Heart left ventricle (tissue), 16 donors: ENCODE measurements at regions of chr1 and their contacts with region 1.

Region 1: GRCh38 chr1:95116580-95117206 is 462 bp upstream of the TLCD4 start:
- DNase-seq: peak; percentile 55 to 64 (median 57)
- ATAC-seq: peak; percentile 57 to 82 (median 74)
- H3K4me3 ChIP-seq: peak overlapping the region; percentile 47 to 96 (median 74)
- H3K27ac ChIP-seq: peak overlapping the region in 11 of 12 donors; percentile 62 to 91 (median 85)
- H3K4me1 ChIP-seq: peaks cover 0 to 35% (median 4%) of the 10 kb centered on the region in 12 donors
- H3K27me3 ChIP-seq: peaks cover 0 to 27% (median 0%) of the 10 kb centered on the region in 9 donors
- CTCF ChIP-seq: peak; percentile 27 to 65 (median 54)
- POLR2A ChIP-seq: no peak

Region 2: DNA sequence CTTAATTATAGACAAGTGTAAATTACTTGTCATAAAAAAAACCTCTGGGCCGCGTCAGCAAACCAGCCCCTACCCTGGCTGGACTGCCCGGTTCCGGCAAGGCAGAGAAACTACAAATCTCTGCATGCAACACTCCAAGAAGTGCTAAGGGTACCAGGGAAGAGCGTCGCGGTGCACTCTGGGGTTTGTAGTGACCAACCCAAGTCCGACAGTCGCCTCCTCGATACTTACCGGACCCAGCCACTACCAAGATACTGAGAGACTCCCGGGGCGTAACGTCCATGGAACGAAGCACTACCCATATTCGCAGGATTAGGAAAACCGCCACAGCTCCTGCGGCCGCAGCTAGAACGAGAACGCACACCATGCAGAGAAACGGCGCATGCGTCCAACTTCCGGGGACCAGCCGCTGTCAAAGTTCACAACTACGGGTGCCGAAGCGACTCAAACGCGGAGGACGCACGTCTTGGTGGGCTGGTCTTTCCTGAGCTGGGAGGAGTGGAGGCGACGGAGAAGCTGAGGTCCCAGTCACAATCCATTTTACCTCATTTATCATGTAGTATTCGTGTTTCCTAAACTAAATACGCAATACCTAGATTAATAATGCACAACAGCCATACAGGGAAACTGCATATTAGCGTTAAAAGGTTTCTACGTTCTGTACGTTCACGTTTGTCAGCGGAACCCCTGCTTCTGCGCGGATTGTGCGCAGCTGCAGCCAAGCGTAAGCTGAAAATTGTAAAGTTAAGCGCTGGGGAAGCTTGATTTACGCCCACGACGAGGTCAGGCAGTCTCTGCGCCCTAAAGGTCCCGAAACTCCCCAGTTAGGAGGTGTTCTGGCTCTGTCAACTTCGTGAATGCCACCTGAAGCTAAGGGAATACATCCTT is 43.9 kb before region 1 on chr1 and contains the start of gene ALG14:
- intact Hi-C with region 1: loop called in 2 of 10 experiments (anchors 2 kb)
- DNase-seq: peak; percentile 95 to 96 (median 96)
- ATAC-seq: peak; percentile 99
- H3K4me3 ChIP-seq: peak within 1 kb of the TSS; percentile 65 to 90 (median 69)
- H3K27ac ChIP-seq: peak within 1 kb of the TSS; percentile 85 to 98 (median 93)
- H3K4me1 ChIP-seq: peaks cover 0 to 17% (median 8%) of the 10 kb centered on the region in 12 donors
- H3K27me3 ChIP-seq: no peaks in the 10 kb centered on the region
- CTCF ChIP-seq: no peak
- POLR2A ChIP-seq: peak in 1 of 2 donors; percentile 58
- total RNA-seq, gene ALG14: 0.56 to 4.7 (median 3.2) TPM

Region 3: DNA sequence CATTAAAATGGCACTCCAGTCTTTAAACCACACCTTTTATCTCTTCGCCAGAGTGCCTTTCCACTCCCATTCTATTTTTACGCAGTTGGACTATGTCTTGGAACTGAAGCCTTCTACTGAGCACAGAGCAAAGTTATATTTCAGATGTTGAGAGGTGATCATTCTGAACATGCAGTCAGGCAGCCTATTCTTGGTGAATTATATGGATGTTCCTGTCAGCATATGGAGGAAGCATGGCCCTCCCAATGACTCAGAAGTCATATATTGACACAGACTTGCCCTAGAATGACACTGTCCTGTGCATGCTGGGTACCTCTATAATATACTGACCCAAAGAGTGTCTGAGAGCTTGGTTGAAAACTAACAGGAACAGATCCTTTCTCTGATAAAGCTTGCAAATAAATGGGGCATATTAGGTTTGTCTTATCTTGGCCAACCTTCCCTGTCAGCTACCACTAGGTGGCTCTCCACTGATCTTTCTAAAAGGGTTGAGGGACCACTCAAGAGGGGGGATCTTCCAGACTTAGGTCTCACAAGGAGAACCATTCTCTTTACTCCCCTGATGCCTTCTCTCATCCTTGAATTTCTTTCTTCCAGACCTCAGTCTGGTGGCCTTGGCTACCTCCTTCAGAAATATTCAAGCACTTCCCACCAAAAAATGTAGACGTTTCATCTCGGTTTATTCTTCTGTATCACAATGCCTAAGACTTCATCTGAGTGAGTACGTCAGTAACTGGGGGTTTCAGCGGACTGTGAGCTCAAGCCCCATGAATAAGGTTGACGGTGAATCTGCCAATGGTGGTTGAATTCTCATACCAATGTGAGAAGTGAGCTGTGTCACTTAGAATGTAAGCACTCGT is 32.1 kb before region 1 on chr1:
- intact Hi-C with region 1: loop called in 1 of 10 experiments (anchors 5 kb)
- DNase-seq: no peak
- ATAC-seq: peak in 3 of 4 donors; percentile 9 to 65 (median 61)
- H3K4me3 ChIP-seq: no peak overlapping the region
- H3K27ac ChIP-seq: peak overlapping the region in 8 of 12 donors; percentile 28 to 83 (median 66)
- H3K4me1 ChIP-seq: peaks cover 0 to 32% (median 13%) of the 10 kb centered on the region in 12 donors
- H3K27me3 ChIP-seq: no peaks in the 10 kb centered on the region
- CTCF ChIP-seq: peak; percentile 35 to 63 (median 52)
- POLR2A ChIP-seq: no peak

Region 4: GRCh38 chr1:95752515-95753381 is 636.1 kb after region 1 on chr1:
- intact Hi-C with region 1: no loop called
- DNase-seq: no peak
- ATAC-seq: no peak
- H3K4me3 ChIP-seq: no peak overlapping the region
- H3K27ac ChIP-seq: no peak overlapping the region
- H3K4me1 ChIP-seq: no peaks in the 10 kb centered on the region
- H3K27me3 ChIP-seq: no peaks in the 10 kb centered on the region
- CTCF ChIP-seq: no peak
- POLR2A ChIP-seq: no peak